Activated CD8-positive, alpha-beta T cell treated with anti-CD3 and anti-CD28 coated beads, Interleukin-2, amount 10 ng/mL, durations not matched to agents 7 days and 5 days (primary cell): ENCODE measurements at regions of chr17 and their contacts with region 1.

Region 1: DNA sequence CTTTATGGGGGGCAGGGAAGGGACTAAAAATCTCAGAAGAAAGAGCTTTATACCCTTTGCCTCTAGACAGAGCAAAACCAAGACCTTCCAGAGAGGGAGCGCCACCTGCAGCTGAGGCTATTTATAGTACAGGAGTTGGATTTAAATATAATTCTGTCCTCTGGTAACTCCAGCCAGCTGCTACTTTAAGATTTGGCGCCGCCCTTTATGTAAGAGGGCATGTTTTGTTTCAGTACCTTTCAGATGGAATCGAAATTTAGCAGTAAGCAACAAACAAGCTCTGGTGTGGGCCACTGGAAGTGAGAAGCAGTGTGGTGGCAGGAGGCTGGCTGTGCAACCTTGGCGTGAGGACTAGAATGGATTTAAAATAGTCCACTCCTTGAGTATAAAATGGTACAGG is 5.2 kb upstream of the GUCY2D start:
- DNase-seq: peak; percentile 69
- ATAC-seq: peak; percentile 83
- H3K4me3 Mint-ChIP-seq: no peak overlapping the region
- H3K27ac Mint-ChIP-seq: no peak overlapping the region
- H3K4me1 Mint-ChIP-seq: peaks cover 12% of the 10 kb centered on the region
- H3K27me3 Mint-ChIP-seq: peaks cover 40% of the 10 kb centered on the region

Region 2: GRCh38 chr17:8016632-8017478 is 19.7 kb after region 1 on chr17:
- CTCF ChIA-PET with region 1: interaction called, 12 read pairs
- POLR2A ChIA-PET with region 1: interaction called, 3 read pairs
- DNase-seq: peak; percentile 73
- ATAC-seq: peak; percentile 81
- H3K4me3 Mint-ChIP-seq: peak overlapping the region; percentile 69
- H3K27ac Mint-ChIP-seq: no peak overlapping the region
- H3K4me1 Mint-ChIP-seq: peaks cover 18% of the 10 kb centered on the region
- H3K27me3 Mint-ChIP-seq: peaks cover 39% of the 10 kb centered on the region